ENCODE measurements at regions of chr15 and their contacts with region 1.

Region 1: GRCh38 chr15:72272213-72273002 is at the start of gene PARP6:
- DNase-seq: peak; percentile 88
- H3K4me3 ChIP-seq: peak within 1 kb of the TSS; percentile 84
- CTCF ChIP-seq: peak; percentile 63

Region 2: DNA sequence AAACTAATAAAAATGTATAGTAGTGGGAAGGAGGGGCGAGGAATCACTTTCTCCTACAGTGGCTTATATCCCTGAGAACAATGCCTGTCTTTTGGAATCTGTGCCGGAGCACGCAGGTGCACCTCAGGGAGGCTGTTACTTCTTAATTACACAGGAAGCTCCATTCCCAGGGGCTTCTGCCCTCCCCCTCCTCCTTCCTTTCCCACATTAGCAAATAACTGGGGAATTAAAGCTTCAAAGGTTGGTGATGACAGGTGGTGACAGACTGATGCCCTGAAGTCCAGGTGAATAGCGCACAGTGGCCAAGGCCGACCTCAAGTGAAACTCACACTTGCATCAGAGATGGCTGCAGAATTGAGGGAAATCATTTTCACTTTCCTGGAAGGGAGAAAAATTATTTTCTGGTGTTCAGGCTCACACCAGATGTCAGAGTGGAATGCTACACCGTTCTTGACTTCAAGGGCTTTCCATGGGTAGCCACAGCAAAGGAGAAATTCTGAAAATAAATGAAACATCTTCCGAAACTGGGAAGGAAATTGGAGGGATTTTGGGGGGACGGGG is 78.5 kb before region 1 on chr15:
- in situ Hi-C with region 1: loop called (anchors 5 kb)
- DNase-seq: no peak
- H3K4me3 ChIP-seq: no peak overlapping the region
- CTCF ChIP-seq: no peak

Region 3: GRCh38 chr15:72237286-72238224 is 34.9 kb before region 1 on chr15:
- in situ Hi-C with region 1: no loop called
- DNase-seq: peak; percentile 97
- H3K4me3 ChIP-seq: peak overlapping the region; percentile 24
- CTCF ChIP-seq: no peak

Region 4: GRCh38 chr15:72319985-72320671 is 47.7 kb after region 1 on chr15 and contains the start of gene CELF6:
- in situ Hi-C with region 1: no loop called
- DNase-seq: peak; percentile 28
- H3K4me3 ChIP-seq: peak within 1 kb of the TSS; percentile 47
- CTCF ChIP-seq: no peak

Region 5: DNA sequence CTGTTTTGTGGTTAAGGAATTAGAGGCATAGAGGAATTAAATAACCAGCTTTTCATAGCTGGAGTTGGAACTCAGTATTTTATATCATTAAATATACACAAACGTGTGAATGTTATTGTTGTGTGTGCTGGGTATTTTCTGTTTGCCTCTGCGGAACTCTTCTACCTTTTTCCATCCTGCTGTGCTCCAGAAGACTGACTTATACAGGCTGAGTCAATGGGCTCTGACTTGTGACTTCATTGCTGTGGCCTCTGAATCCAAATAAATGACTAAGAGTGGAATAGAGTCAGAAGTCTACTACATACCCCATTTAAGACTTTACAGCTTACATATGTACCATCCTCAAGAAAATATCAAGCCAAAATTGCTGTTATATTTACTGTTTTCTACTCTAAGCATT is 219.4 kb after region 1 on chr15:
- in situ Hi-C with region 1: loop called (anchors 10 kb)
- DNase-seq: no peak
- H3K4me3 ChIP-seq: no peak overlapping the region
- CTCF ChIP-seq: no peak

Measured in astrocyte of the cerebellum (primary cell).